ENCODE measurements at regions of chr12 and their contacts with region 1.

Region 1: GRCh38 chr12:47307680-47308399 is 228.1 kb upstream of the AMIGO2 start:
- DNase-seq: peak; percentile 66
- CTCF ChIP-seq: peak; percentile 68

Region 2: DNA sequence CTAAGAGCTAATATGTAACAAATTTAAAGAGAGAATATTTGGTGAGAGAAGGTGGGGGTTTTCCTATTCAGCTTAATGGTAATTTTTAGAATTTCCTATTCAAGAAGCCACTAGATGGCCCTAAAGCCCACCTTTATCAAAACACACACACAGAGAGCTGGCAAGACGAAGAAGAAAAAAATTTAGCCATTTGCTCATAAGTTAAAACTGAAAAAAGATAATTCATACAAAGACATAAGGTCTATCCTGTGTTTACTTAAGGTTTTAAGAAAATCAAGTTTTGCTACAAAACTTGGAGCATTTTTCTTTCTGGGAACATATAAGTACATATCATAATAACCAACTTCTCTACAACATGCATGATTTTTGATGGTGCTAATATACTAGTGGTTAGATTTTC is 275.2 kb before region 1 on chr12:
- in situ Hi-C with region 1: loop called (anchors 25 kb)
- DNase-seq: no peak
- CTCF ChIP-seq: peak; percentile 47